Endothelial cell of umbilical vein (primary cell): ENCODE measurements at regions of chr20 and their contacts with region 1.

Region 1: DNA sequence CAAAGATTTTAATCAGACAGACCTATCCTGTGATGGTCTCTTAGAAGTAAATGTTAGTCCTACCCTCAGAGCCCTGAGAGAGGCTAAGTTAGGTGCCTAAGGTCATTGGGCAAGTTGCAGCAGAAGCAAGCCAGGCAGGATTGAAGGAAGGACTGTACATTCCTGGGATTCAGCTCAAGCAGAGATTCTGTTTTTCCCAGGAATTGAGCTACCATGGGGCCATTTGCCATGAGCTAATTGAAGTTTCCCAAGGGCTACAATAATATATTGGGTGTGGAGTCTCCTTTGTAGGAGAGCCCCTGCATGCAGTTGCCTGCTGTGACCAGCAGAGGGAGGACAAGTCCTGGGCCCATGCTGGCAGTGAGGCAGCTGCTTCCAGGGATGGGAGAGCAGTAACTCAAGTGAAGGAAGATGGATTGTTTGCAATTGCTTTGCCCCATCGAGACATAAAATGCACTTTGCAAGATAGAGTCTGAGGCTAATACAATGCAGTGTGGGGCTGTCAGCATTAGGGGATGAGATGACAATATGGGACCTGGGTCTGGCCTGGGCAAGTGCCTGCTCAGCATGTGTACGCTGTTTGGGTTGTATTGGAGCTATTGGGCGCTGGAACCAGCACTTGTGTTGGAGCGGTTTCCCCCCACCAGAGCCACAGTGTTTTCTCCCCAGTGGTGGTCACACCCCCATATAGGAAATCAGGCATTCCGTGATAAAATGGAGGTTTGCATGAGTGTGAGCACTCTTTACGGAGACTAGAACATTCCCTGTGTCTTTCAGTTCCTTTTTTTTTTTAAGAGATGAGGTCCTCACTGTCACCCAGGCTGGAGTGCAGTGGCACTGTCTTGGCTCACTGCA is 27.9 kb downstream of the DNMT3B start:
- DNase-seq: peak; percentile 64
- H3K4me3 ChIP-seq: no peak overlapping the region
- H3K27ac ChIP-seq: no peak overlapping the region
- H3K4me1 ChIP-seq: peaks cover 10% of the 10 kb centered on the region
- H3K27me3 ChIP-seq: no peaks in the 10 kb centered on the region
- CTCF ChIP-seq: peak; percentile 97 to 99
- POLR2A ChIP-seq: no peak

Region 2: DNA sequence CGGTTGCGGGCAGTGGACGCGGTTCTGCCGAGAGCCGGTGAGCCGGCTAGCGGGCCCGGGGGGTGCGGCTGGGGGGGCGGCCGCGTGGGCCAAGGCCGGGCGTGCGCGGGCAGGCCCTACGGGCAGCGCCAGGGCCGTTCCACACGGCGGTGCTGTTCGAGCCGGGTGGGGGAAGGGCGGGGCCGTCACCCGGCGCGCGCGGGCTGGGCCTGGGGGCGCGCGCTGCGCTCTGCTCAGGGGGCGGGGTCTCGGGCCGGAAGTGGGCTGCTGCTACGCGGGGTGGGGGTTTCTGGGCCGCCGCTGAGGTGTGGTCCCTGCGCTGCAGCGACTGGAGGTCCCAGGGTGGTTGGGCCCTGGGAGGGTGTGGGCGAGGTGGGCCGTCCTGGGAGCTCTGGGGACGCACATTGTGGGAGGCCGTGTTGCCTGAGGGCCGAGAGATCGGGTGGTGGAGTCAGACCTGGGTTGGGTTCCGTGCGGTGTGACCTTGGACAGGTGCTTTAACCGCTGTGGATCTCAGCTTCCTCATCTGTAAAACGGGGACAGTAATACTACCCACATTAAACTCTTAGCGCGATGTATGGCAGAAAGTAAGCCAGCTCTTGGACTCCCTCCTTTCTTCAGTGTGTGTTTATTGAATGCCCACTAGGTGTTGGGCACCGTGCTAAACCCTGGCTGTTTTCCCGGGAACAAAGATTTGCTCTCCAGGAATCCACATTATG is 30.0 kb after region 1 on chr20:
- CTCF ChIA-PET with region 1: interaction called, 12 read pairs
- POLR2A ChIA-PET with region 1: interaction called, 6 read pairs
- dilution Hi-C with region 1: no loop called
- intact Hi-C with region 1: loop called (anchors 1 kb)
- DNase-seq: peak; percentile 64
- H3K4me3 ChIP-seq: peak overlapping the region; percentile 73 to 94 (median 89)
- H3K27ac ChIP-seq: peak overlapping the region; percentile 22
- H3K4me1 ChIP-seq: peaks cover 28% of the 10 kb centered on the region
- H3K27me3 ChIP-seq: no peaks in the 10 kb centered on the region
- CTCF ChIP-seq: no peak
- POLR2A ChIP-seq: no peak

Region 3: DNA sequence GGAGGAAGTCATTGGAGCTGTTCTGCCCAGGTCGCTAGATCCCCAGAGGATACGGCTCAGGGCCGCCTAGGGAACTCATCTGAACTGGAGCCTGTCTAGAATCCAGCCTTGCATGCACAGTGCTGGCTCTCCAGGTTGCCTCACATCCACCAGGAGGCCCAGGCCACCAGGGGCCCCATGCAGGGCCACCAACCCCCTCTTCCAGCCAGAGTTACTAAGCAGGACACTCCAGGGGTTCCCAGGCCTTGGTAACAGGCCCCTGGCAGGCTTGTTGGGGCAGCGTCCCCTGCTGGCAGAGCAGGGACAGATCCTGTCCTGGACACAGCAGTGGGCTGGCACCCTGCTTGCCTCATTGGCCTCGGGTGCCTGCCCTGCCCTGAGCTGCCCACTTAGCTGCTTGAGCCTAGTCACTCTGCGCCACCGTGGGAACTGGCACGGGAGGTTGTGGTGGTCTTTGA is 103.9 kb after region 1 on chr20:
- CTCF ChIA-PET with region 1: interaction called, 33 read pairs
- POLR2A ChIA-PET with region 1: no interaction called
- dilution Hi-C with region 1: no loop called
- intact Hi-C with region 1: loop called (anchors 1 kb)
- DNase-seq: no peak
- H3K4me3 ChIP-seq: no peak overlapping the region
- H3K27ac ChIP-seq: no peak overlapping the region
- H3K4me1 ChIP-seq: no peaks in the 10 kb centered on the region
- H3K27me3 ChIP-seq: no peaks in the 10 kb centered on the region
- CTCF ChIP-seq: peak; percentile 23 to 73
- POLR2A ChIP-seq: no peak

Region 4: GRCh38 chr20:32945710-32946221 is 155.6 kb after region 1 on chr20:
- CTCF ChIA-PET with region 1: interaction called, 31 read pairs
- POLR2A ChIA-PET with region 1: no interaction called
- dilution Hi-C with region 1: no loop called
- intact Hi-C with region 1: loop called (anchors 1 kb)
- DNase-seq: peak; percentile 37
- H3K4me3 ChIP-seq: no peak overlapping the region
- H3K27ac ChIP-seq: no peak overlapping the region
- H3K4me1 ChIP-seq: no peaks in the 10 kb centered on the region
- H3K27me3 ChIP-seq: peaks cover 17 to 29% of the 10 kb centered on the region in 2 experiments
- CTCF ChIP-seq: peak; percentile 23 to 41
- POLR2A ChIP-seq: no peak

Region 5: GRCh38 chr20:32982617-32983458 is 192.7 kb after region 1 on chr20:
- CTCF ChIA-PET with region 1: no interaction called
- POLR2A ChIA-PET with region 1: no interaction called
- dilution Hi-C with region 1: no loop called
- intact Hi-C with region 1: no loop called
- DNase-seq: no peak
- H3K4me3 ChIP-seq: no peak overlapping the region
- H3K27ac ChIP-seq: no peak overlapping the region
- H3K4me1 ChIP-seq: no peaks in the 10 kb centered on the region
- H3K27me3 ChIP-seq: peaks cover 0 to 1% of the 10 kb centered on the region in 2 experiments
- CTCF ChIP-seq: no peak
- POLR2A ChIP-seq: no peak

Region 6: DNA sequence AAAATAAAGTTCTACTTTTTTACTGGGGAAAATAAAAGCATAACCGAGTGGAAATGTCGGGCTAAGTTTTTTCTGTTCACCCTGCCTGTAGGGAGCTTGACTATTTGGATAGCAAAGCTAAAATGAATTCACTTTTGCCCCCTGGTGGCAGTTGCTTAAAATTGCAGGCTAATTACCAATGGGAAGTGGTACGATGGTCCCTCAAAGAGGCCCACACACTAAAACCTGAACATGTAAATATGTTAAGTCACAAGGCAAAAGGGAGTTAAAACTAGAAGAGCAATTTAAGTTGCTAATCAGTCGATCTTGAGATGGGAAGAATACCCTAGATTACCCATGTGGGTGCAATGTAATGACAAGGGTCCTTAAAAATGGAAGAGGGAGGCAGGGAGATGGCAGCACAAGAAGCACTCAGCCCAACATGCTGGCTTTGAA is 215.0 kb after region 1 on chr20:
- CTCF ChIA-PET with region 1: interaction called, 5 read pairs
- POLR2A ChIA-PET with region 1: no interaction called
- dilution Hi-C with region 1: no loop called
- intact Hi-C with region 1: loop called (anchors 5 kb)
- DNase-seq: no peak
- H3K4me3 ChIP-seq: no peak overlapping the region
- H3K27ac ChIP-seq: no peak overlapping the region
- H3K4me1 ChIP-seq: no peaks in the 10 kb centered on the region
- H3K27me3 ChIP-seq: no peaks in the 10 kb centered on the region
- CTCF ChIP-seq: peak; percentile 34 to 56
- POLR2A ChIP-seq: no peak

Region 7: GRCh38 chr20:33299111-33299603 is 509.0 kb after region 1 on chr20:
- CTCF ChIA-PET with region 1: no interaction called
- POLR2A ChIA-PET with region 1: no interaction called
- dilution Hi-C with region 1: no loop called
- intact Hi-C with region 1: loop called (anchors 1 kb)
- DNase-seq: peak; percentile 54
- H3K4me3 ChIP-seq: no peak overlapping the region
- H3K27ac ChIP-seq: no peak overlapping the region
- H3K4me1 ChIP-seq: no peaks in the 10 kb centered on the region
- H3K27me3 ChIP-seq: peaks cover 0 to 4% of the 10 kb centered on the region in 2 experiments
- CTCF ChIP-seq: peak; percentile 93 to 97
- POLR2A ChIP-seq: no peak